Heart left ventricle (tissue), 16 donors: ENCODE measurements at regions of chr21 and their contacts with region 1.

Region 1: DNA sequence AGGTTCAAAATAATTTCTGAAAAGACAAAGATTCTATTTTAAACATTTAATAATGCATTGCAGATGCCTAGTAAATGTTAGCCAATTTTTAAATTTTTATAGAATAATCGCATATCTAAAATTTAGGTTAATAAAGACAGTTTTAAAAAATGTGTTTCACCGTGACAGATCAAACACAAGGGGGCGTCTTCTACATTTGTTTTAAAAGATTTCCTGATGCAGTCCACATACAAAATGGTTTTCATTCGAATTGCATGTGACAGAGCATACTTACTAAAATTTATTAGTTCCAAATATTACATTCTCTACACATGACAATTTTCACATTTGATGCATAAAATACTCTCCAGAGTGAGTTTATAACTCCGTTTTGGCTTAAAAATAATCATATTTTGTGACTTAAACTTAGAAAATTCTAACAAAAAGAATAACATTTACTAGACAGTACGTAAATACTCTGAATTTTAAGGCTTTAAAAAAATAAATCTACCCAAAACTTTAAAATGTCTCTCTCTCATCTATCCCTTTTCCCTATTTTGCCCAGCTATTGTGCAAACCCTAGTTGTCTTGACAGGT is 75.5 kb downstream of the ADAMTS1 start:
- DNase-seq: no peak
- ATAC-seq: peak in 1 of 4 donors; percentile 42
- H3K4me3 ChIP-seq: no peak overlapping the region
- H3K27ac ChIP-seq: peak overlapping the region in 2 of 12 donors; percentile 0 to 7
- H3K4me1 ChIP-seq: peaks cover 0 to 3% (median 0%) of the 10 kb centered on the region in 12 donors
- H3K27me3 ChIP-seq: no peaks in the 10 kb centered on the region
- CTCF ChIP-seq: peak; percentile 57 to 76 (median 70)
- POLR2A ChIP-seq: no peak

Region 2: DNA sequence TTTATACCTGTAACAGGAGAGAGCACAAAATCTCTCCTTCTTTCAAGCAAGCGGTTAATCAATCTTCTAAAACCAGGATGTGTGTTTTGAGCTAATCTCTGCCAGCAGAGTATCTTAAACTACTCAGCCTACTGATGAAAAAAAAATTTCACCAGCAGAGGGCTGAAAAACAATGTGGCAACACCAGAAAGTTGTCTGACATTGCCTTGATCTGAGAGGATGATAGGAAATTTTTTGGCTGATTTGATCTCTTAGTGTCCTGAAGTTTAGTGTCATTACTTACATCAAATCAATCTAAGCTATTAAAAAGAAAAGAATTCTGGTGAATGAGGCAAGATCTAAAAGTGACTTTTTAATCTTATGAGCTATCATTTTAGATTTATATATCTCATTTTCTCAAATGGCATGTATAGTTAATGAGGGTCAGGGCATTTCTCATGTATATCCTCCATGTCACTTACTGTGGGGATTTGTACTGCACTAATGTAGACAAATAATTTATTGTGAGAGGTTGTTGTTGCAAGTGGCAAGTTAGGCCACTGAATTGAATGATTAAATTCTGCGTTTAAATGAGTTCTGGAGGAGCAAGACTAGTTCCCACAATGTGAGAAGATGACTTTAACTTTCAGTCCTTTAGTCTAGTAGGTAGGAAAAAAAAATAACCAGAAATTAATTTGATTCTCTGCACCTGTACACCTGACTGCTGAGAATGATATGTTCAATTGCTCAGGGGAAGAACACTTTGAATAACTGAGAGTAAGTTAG is 64.7 kb after region 1 on chr21:
- intact Hi-C with region 1: loop called in 1 of 10 experiments (anchors 5 kb)
- DNase-seq: no peak
- ATAC-seq: no peak
- H3K4me3 ChIP-seq: no peak overlapping the region
- H3K27ac ChIP-seq: peak overlapping the region in 1 of 12 donors; percentile 5
- H3K4me1 ChIP-seq: peaks cover 0 to 28% (median 23%) of the 10 kb centered on the region in 12 donors
- H3K27me3 ChIP-seq: no peaks in the 10 kb centered on the region
- CTCF ChIP-seq: peak in 5 of 12 donors; percentile 8 to 34 (median 27)
- POLR2A ChIP-seq: no peak

Region 3: GRCh38 chr21:27693376-27693775 is 923.7 kb after region 1 on chr21:
- intact Hi-C with region 1: loop called in 2 of 10 experiments (anchors 10 kb)
- DNase-seq: no peak
- ATAC-seq: no peak
- H3K4me3 ChIP-seq: no peak overlapping the region
- H3K27ac ChIP-seq: no peak overlapping the region
- H3K4me1 ChIP-seq: no peaks in the 10 kb centered on the region
- H3K27me3 ChIP-seq: no peaks in the 10 kb centered on the region
- CTCF ChIP-seq: no peak
- POLR2A ChIP-seq: no peak